Activated CD4-positive, alpha-beta T cell treated with anti-CD3 and anti-CD28 coated beads for 36 hours (primary cell): ENCODE measurements at regions of chr7 and their contacts with region 1.

Region 1: DNA sequence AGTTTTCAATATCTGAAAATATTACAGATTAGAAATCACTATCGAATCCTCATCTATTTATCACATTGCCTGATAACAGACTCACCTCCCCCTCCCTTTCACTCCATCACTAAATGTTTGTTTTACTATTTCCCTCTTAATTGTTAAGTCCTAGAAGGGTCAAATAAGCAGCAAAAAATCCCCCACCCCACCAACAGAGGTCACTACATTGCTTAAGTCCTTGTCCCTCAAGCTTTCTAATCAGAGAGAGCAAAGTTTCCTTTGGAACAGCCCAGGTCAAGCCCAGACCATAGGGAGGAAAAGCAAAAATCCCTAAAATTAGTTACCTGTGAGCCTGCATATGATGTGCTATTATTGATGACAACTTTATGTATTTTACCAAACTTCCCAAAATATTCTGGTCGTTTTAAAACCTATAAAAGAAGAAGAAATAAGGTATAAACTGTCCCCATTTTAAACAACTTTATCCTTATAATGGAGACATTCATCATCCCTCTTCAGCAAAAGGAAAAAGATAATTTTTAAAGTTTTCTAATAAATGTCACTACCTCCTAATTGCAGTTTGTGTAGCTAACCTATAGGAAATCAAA is 95.0 kb downstream of the CNOT4 start:
- DNase-seq: peak; percentile 49
- ATAC-seq: peak; percentile 30
- H3K4me3 Mint-ChIP-seq: no peak overlapping the region
- H3K27ac Mint-ChIP-seq: no peak overlapping the region
- H3K4me1 Mint-ChIP-seq: peaks cover 5% of the 10 kb centered on the region
- H3K27me3 Mint-ChIP-seq: no peaks in the 10 kb centered on the region

Region 2: DNA sequence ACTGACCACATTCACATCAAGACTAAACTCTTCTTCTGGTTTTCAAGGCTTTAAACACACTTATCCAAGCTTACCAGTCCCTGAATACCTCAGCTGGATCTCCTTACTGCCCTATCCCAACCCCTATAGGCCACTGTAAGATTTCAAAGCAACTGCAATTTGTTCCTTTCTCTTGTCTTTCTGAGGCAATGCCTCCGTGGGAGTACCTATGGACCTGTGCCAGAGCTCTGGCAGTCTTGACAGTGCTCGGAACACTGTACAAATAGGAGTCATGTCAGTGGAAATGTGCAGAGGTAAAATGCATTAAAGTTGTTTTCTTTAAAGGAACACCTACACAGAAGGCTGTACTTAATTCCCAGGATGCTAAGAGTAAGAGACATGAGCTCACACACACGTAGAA is 29.7 kb before region 1 on chr7:
- CTCF ChIA-PET with region 1: no interaction called
- POLR2A ChIA-PET with region 1: no interaction called
- intact Hi-C with region 1: no loop called
- DNase-seq: no peak
- ATAC-seq: no peak
- H3K4me3 Mint-ChIP-seq: no peak overlapping the region
- H3K27ac Mint-ChIP-seq: no peak overlapping the region
- H3K4me1 Mint-ChIP-seq: no peaks in the 10 kb centered on the region
- H3K27me3 Mint-ChIP-seq: no peaks in the 10 kb centered on the region

Region 3: DNA sequence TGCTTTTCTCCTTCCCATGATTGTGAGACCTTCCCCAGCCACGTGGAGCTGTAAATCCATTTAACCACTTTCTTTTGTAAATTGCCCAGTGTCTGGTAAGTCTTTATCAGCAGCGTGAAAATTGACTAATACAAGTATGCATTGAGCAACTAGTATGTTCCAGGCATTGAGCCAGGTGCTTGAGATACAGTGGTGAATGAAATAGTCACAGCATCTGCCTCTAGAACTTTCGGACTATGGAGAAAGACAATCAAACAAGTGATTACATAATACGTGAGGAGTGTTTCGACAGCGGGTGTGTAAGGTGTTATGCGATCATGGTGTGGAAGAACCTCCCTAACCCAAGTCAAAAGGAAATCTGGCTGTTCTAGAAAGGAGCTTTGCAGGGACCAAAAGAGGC is 121.2 kb after region 1 on chr7:
- CTCF ChIA-PET with region 1: no interaction called
- POLR2A ChIA-PET with region 1: no interaction called
- intact Hi-C with region 1: no loop called
- DNase-seq: no peak
- ATAC-seq: no peak
- H3K4me3 Mint-ChIP-seq: no peak overlapping the region
- H3K27ac Mint-ChIP-seq: no peak overlapping the region
- H3K4me1 Mint-ChIP-seq: no peaks in the 10 kb centered on the region
- H3K27me3 Mint-ChIP-seq: peaks cover 13% of the 10 kb centered on the region

Region 4: GRCh38 chr7:135558337-135558767 is 143.4 kb after region 1 on chr7:
- CTCF ChIA-PET with region 1: no interaction called
- POLR2A ChIA-PET with region 1: no interaction called
- intact Hi-C with region 1: loop called in 1 of 2 experiments (anchors 2 kb)
- DNase-seq: peak; percentile 78
- ATAC-seq: peak; percentile 73
- H3K4me3 Mint-ChIP-seq: no peak overlapping the region
- H3K27ac Mint-ChIP-seq: no peak overlapping the region
- H3K4me1 Mint-ChIP-seq: peaks cover 29% of the 10 kb centered on the region
- H3K27me3 Mint-ChIP-seq: no peaks in the 10 kb centered on the region